CD14-positive monocyte (primary cell): ENCODE measurements at regions of chr17 and their contacts with region 1.

Region 1: GRCh38 chr17:50707289-50708049 is at the start of gene ANKRD40:
- DNase-seq: peak; percentile 90 to 94 (median 90)
- H3K4me3 ChIP-seq: peak within 1 kb of the TSS; percentile 59 to 85 (median 70)
- H3K4me3 Mint-ChIP-seq: peak within 1 kb of the TSS; percentile 96 to 97
- H3K27ac ChIP-seq: peak within 1 kb of the TSS; percentile 82 to 96
- H3K27ac Mint-ChIP-seq: peak within 1 kb of the TSS; percentile 96 to 98 (median 98)
- H3K4me1 ChIP-seq: peaks cover 29 to 40% of the 10 kb centered on the region in 2 donors
- H3K4me1 Mint-ChIP-seq: peaks cover 38% of the 10 kb centered on the region
- H3K27me3 ChIP-seq: no peaks in the 10 kb centered on the region
- H3K27me3 Mint-ChIP-seq: no peaks in the 10 kb centered on the region
- CTCF ChIP-seq: no peak
- polyA plus RNA-seq, gene ANKRD40: 3.4 to 21.8 (median 3.4) TPM

Region 2: DNA sequence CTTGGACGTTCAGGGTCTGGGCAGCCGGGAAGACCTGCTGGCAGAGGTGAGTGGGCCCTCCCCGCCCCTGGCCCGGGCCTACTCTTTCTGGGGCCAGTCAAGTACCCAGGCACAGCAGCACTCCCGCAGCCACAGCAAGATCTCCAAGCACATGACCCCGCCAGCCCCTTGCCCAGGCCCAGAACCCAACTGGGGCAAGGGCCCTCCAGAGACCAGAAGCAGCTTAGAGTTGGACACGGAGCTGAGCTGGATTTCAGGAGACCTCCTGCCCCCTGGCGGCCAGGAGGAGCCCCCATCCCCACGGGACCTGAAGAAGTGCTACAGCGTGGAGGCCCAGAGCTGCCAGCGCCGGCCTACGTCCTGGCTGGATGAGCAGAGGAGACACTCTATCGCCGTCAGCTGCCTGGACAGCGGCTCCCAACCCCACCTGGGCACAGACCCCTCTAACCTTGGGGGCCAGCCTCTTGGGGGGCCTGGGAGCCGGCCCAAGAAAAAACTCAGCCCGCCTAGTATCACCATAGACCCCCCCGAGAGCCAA is 81.4 kb before region 1 on chr17:
- intact Hi-C with region 1: loop called in 1 of 2 experiments (anchors 10 kb)
- DNase-seq: peak; percentile 45 to 69 (median 62)
- H3K4me3 ChIP-seq: no peak overlapping the region
- H3K4me3 Mint-ChIP-seq: no peak overlapping the region
- H3K27ac ChIP-seq: no peak overlapping the region
- H3K27ac Mint-ChIP-seq: no peak overlapping the region
- H3K4me1 ChIP-seq: peaks cover 15 to 41% of the 10 kb centered on the region in 2 donors
- H3K4me1 Mint-ChIP-seq: peaks cover 19% of the 10 kb centered on the region
- H3K27me3 ChIP-seq: peaks cover 0 to 19% of the 10 kb centered on the region in 2 donors
- H3K27me3 Mint-ChIP-seq: peaks cover 39 to 55% (median 46%) of the 10 kb centered on the region in 3 donors
- CTCF ChIP-seq: peak; percentile 64

Region 3: DNA sequence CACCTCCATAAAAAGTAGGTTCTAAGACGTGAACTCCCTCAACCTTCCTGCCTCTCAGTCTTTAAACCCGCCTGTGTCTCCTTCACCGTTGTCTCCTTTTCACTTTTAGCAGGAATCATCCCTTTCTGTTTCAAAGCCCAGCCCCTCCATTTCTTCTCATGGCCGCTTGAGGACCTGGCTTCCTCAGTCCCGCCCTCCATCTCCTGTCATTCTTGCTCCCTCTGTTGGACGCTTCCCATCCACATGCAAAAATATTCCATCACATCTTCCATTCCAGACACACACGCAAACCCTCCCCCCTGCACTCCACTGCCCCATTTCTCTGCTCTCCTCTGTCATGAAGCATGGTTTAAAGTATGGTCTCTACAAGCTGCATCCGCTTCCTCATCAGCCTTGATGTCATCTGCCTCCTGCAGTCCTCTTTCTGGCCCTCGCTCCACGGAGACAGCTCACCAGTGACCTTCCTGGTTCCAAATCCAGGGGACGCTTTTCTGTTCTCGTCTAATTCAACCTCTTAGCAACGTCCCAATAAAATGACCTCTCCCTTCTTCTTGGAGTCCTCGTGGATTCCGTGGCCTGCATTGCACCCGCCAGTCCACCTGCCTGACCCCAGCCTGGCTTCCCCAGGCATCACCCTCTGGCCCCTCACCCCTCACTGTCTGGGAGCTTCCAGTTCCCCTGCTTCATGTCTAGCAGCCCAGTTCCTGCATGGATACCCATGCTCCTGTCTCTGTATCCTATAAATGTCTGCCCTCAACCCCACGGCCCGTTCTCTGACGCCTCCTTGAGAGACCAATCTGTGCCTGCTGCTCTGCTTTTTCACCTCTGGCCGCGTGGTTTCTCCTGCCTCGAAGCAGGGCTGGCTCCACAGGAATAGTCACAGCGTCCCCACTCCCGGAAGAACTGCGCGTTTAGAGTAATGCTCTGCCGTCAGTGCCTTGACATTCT is 25.9 kb before region 1 on chr17:
- intact Hi-C with region 1: no loop called
- DNase-seq: peak; percentile 57 to 72 (median 67)
- H3K4me3 ChIP-seq: peak overlapping the region in 1 of 3 experiments; percentile 47
- H3K4me3 Mint-ChIP-seq: peak overlapping the region; percentile 60 to 91
- H3K27ac ChIP-seq: no peak overlapping the region
- H3K27ac Mint-ChIP-seq: peak overlapping the region in 2 of 7 donors; percentile 31 to 33
- H3K4me1 ChIP-seq: peaks cover 5 to 9% of the 10 kb centered on the region in 2 donors
- H3K4me1 Mint-ChIP-seq: peaks cover 9% of the 10 kb centered on the region
- H3K27me3 ChIP-seq: no peaks in the 10 kb centered on the region
- H3K27me3 Mint-ChIP-seq: peaks cover 11 to 14% (median 13%) of the 10 kb centered on the region in 3 donors
- CTCF ChIP-seq: peak; percentile 36

Region 4: DNA sequence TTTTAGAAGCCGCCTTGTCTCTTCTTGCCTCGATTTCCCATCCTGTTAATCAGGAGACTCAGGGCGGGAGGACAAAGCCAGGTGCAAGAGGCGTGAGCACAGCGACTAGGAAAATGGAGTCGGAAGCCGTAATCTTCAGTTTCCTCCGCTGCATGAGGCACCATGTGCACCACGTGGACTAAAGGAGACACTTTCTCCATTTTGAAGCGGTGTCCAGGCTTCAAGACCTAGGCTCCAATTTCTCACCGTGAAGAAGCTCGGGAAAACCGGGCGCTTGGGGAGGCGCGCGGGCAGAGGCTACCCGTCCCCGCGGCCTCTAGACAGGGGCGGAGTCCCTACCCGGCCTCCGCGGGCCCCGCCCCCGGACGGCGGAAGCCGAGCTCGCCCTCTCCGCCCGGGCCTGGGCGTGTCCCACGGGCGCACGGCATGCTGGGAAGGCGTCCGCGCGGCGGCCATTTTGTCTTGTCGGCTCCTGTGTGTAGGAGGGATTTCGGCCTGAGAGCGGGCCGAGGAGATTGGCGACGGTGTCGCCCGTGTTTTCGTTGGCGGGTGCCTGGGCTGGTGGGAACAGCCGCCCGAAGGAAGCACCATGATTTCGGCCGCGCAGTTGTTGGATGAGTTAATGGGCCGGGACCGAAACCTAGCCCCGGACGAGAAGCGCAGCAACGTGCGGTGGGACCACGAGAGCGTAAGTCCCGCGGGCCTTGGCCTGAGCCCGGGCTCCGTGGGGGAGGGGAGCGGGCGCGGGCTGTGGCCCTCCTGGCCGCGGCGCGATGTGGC is 11.9 kb after region 1 on chr17 and contains the start of gene LUC7L3:
- intact Hi-C with region 1: loop called (anchors 1 to 2 kb)
- DNase-seq: peak; percentile 88 to 91 (median 89)
- H3K4me3 ChIP-seq: peak within 1 kb of the TSS; percentile 68 to 91 (median 90)
- H3K4me3 Mint-ChIP-seq: peak within 1 kb of the TSS; percentile 96 to 97
- H3K27ac ChIP-seq: peak within 1 kb of the TSS; percentile 97
- H3K27ac Mint-ChIP-seq: peak within 1 kb of the TSS; percentile 98 to 100 (median 99)
- H3K4me1 ChIP-seq: peaks cover 49 to 69% of the 10 kb centered on the region in 2 donors
- H3K4me1 Mint-ChIP-seq: peaks cover 56% of the 10 kb centered on the region
- H3K27me3 ChIP-seq: no peaks in the 10 kb centered on the region
- H3K27me3 Mint-ChIP-seq: no peaks in the 10 kb centered on the region
- CTCF ChIP-seq: no peak
- polyA plus RNA-seq, gene LUC7L3: 14.6 to 49.8 (median 17.1) TPM